ENCODE measurements at regions of chr19 and their contacts with region 1.

Region 1: DNA sequence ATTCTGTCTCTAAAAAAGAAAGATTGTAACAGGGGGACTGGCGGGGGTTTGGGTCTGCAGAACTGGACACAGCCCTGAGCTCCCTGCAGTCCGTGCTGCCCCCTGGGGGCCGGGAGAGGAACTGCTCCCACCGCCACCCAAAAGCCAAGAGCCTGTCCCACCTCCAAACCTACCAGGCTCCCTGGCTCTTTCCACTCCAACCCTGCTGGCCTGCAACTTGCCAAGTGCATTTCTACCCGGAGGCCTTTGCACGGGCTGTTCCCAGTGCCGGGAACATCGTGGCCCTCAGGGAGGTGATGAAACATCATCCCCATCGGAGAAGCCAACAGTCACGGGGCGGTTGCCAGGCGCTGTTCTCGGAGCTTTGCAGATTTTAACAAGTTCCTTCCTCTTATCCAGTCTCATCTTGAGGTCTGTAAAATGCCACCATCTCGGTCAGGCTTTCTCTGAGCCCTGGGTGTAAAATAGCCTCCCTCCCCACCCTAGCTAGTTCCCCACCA is 50.7 kb downstream of the SMIM24 start:
- DNase-seq: peak; percentile 53 to 88 (median 75)
- ATAC-seq: peak; percentile 90
- H3K4me3 ChIP-seq: no peak overlapping the region
- H3K4me3 Mint-ChIP-seq: no peak overlapping the region
- H3K27ac ChIP-seq: no peak overlapping the region
- H3K27ac Mint-ChIP-seq: no peak overlapping the region
- H3K4me1 ChIP-seq: peaks cover 3% of the 10 kb centered on the region
- H3K4me1 Mint-ChIP-seq: peaks cover 8% of the 10 kb centered on the region
- H3K27me3 ChIP-seq: no peaks in the 10 kb centered on the region
- H3K27me3 Mint-ChIP-seq: no peaks in the 10 kb centered on the region
- CTCF ChIP-seq: peak; percentile 98

Region 2: DNA sequence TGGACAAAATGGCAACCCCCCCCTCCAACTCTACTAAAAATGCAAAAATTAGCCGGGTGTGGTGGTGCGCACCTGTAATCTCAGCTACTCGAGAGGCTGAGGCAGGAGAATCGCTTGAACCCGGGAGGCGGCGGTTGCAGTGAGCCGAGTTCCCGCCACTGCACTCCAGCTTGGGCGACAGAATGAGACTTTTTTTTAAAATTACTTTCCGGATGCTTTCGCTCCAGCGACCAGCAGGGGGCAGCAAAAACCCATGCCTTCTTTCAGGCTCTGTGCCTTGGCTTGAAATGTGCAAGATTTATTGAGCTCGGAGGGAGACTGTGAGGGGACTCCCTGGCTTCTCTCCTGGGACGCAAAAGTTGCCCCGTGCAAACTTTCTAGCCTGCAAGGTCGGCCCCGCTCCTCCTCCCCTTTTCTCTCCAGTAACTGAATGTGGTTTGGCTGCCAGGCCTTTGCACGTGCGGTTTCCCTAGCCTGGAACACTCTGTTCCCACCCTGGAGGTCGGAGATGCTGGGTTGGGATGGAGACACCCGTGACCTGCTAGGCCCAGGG is 124.7 kb before region 1 on chr19:
- CTCF ChIA-PET with region 1: interaction called, 13 read pairs
- POLR2A ChIA-PET with region 1: no interaction called
- intact Hi-C with region 1: no loop called
- DNase-seq: peak; percentile 53 to 85 (median 79)
- ATAC-seq: peak; percentile 75
- H3K4me3 ChIP-seq: no peak overlapping the region
- H3K4me3 Mint-ChIP-seq: no peak overlapping the region
- H3K27ac ChIP-seq: no peak overlapping the region
- H3K27ac Mint-ChIP-seq: no peak overlapping the region
- H3K4me1 ChIP-seq: no peaks in the 10 kb centered on the region
- H3K4me1 Mint-ChIP-seq: no peaks in the 10 kb centered on the region
- H3K27me3 ChIP-seq: peaks cover 0 to 2% of the 10 kb centered on the region in 2 experiments
- H3K27me3 Mint-ChIP-seq: peaks cover 32% of the 10 kb centered on the region
- CTCF ChIP-seq: peak; percentile 82

Region 3: DNA sequence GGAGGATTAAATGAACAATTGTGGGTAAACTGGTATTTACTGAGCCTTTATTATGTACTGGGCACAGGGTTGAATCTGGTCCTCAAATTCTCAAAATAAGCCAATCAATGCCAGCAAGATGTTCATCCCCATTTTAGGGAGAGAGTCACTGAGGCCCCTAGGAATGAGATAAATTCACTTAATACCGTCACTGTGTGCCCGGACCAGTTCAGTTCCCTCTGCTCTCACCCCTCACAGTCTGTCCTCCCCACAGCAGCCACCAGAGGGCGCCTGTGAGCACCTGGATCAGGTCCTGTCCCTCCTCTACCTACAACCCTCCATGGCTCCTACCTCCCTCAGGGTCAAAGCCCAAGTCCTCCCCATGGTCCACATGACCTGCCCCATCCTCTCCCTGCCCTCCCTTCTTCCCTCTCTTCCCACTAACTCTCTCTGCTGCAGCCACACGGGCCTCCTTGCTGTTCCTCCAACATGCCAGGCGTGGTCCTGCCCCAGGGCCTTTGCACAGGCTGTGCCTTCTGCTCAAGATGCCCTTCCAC is 105.2 kb before region 1 on chr19:
- CTCF ChIA-PET with region 1: interaction called, 126 read pairs
- POLR2A ChIA-PET with region 1: interaction called, 4 read pairs
- intact Hi-C with region 1: loop called in 1 of 2 experiments (anchors 1 kb)
- DNase-seq: peak; percentile 58 to 80 (median 68)
- ATAC-seq: peak; percentile 72
- H3K4me3 ChIP-seq: no peak overlapping the region
- H3K4me3 Mint-ChIP-seq: no peak overlapping the region
- H3K27ac ChIP-seq: no peak overlapping the region
- H3K27ac Mint-ChIP-seq: no peak overlapping the region
- H3K4me1 ChIP-seq: no peaks in the 10 kb centered on the region
- H3K4me1 Mint-ChIP-seq: no peaks in the 10 kb centered on the region
- H3K27me3 ChIP-seq: peaks cover 0 to 3% of the 10 kb centered on the region in 2 experiments
- H3K27me3 Mint-ChIP-seq: peaks cover 11% of the 10 kb centered on the region
- CTCF ChIP-seq: peak; percentile 62

Region 4: DNA sequence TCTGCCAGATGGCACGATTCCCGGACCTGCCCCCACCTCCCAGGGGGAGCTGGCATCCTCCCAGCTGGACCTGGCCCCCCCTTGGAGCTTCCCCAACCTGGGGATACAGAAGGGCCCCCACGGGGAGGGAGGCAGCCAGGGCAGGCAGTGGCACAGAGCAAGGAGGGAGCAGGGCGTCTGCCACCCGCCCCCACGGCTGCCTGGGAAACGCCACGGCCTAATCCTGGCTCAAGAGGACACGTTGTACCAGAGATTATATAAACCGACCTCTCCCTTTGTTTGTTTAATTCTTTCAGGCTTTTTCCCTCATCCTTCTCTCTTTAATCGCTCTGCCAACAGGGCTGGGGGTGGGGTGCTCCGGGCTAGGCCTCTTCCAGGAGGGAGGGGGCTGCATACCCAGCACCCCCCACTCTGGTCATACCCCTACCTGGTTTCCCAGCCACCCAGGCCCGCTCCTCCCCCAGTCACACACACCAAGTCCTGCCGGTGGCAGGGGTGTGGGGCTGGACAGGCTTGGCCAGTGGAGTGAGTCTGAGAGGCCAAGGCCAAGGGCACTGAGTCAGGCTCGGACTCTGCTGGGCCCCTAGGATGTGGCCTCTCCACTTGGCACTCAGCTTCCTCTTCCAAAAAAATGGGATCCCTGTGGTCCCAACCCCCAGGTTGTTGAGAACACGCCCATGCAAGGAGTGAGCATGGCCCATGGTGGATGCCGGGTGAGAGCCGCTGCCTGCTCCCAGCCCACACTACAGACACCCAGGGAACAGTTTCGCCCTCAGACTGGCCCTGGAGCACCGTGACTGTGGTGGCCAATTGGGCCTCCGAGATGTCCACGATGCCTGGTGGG is 92.7 kb before region 1 on chr19:
- CTCF ChIA-PET with region 1: interaction called, 26 read pairs
- POLR2A ChIA-PET with region 1: interaction called, 6 read pairs
- intact Hi-C with region 1: no loop called
- DNase-seq: no peak
- ATAC-seq: no peak
- H3K4me3 ChIP-seq: no peak overlapping the region
- H3K4me3 Mint-ChIP-seq: no peak overlapping the region
- H3K27ac ChIP-seq: no peak overlapping the region
- H3K27ac Mint-ChIP-seq: no peak overlapping the region
- H3K4me1 ChIP-seq: peaks cover 12% of the 10 kb centered on the region
- H3K4me1 Mint-ChIP-seq: peaks cover 11% of the 10 kb centered on the region
- H3K27me3 ChIP-seq: peaks cover 0 to 3% of the 10 kb centered on the region in 2 experiments
- H3K27me3 Mint-ChIP-seq: no peaks in the 10 kb centered on the region
- CTCF ChIP-seq: no peak

Region 5: GRCh38 chr19:3343619-3344502 is 85.8 kb before region 1 on chr19:
- CTCF ChIA-PET with region 1: interaction called, 26 read pairs
- POLR2A ChIA-PET with region 1: interaction called, 6 read pairs
- intact Hi-C with region 1: no loop called
- DNase-seq: peak in 5 of 9 experiments; percentile 27 to 74 (median 60)
- ATAC-seq: peak; percentile 93
- H3K4me3 ChIP-seq: peak overlapping the region; percentile 27 to 39
- H3K4me3 Mint-ChIP-seq: peak overlapping the region; percentile 64
- H3K27ac ChIP-seq: no peak overlapping the region
- H3K27ac Mint-ChIP-seq: peak overlapping the region; percentile 60
- H3K4me1 ChIP-seq: peaks cover 5% of the 10 kb centered on the region
- H3K4me1 Mint-ChIP-seq: peaks cover 8% of the 10 kb centered on the region
- H3K27me3 ChIP-seq: no peaks in the 10 kb centered on the region
- H3K27me3 Mint-ChIP-seq: no peaks in the 10 kb centered on the region
- CTCF ChIP-seq: no peak

Region 6: DNA sequence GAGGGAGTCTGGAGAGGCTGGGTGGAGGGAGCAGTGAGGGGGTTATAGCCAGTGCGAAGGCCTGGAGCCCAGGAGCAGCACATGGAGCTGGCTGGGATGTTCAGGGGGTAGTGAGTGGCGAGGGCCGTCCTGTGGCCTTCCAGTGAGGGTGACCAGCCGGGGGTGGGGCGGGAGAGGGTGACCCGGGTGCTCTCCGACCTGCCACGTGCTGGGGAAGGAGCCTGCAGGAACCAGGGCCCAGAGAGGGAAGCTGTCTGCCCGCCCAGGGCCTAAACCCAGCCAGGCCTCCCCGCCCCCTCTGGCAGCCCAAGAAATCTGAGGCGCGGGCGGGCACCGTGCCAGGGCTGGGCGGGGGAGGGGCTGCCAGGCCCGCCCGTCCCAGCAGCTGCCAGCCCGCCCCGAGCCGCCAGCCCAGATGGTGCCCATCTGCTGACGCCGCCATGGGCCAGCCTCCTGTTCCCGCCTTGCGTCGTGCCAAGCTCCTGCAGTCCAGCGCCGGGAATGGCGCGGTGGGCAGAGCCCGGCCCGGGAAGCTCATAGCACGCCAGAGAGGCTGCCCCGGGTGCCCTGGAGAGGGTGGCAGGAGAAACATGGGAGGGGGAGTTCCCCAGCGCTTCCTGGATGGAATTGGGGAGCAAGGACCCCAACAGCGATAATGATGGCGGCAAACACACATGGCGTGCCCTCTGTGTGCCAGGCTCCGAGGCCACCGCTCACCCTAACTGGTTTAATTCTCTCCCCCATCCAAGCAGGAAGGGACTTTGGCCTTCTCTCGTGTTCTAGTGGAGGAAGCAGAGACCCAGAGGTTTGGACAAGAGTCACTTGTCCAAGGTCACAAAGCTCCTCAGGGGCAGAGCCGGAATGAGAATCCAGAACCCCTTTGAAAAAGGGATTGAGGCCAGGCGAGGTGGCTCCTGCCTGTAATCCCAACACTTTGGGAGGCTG is 41.7 kb before region 1 on chr19:
- CTCF ChIA-PET with region 1: interaction called, 16 read pairs
- POLR2A ChIA-PET with region 1: no interaction called
- intact Hi-C with region 1: no loop called
- DNase-seq: no peak
- ATAC-seq: no peak
- H3K4me3 ChIP-seq: no peak overlapping the region
- H3K4me3 Mint-ChIP-seq: no peak overlapping the region
- H3K27ac ChIP-seq: no peak overlapping the region
- H3K27ac Mint-ChIP-seq: no peak overlapping the region
- H3K4me1 ChIP-seq: no peaks in the 10 kb centered on the region
- H3K4me1 Mint-ChIP-seq: peaks cover 6% of the 10 kb centered on the region
- H3K27me3 ChIP-seq: no peaks in the 10 kb centered on the region
- H3K27me3 Mint-ChIP-seq: no peaks in the 10 kb centered on the region
- CTCF ChIP-seq: no peak

Region 7: DNA sequence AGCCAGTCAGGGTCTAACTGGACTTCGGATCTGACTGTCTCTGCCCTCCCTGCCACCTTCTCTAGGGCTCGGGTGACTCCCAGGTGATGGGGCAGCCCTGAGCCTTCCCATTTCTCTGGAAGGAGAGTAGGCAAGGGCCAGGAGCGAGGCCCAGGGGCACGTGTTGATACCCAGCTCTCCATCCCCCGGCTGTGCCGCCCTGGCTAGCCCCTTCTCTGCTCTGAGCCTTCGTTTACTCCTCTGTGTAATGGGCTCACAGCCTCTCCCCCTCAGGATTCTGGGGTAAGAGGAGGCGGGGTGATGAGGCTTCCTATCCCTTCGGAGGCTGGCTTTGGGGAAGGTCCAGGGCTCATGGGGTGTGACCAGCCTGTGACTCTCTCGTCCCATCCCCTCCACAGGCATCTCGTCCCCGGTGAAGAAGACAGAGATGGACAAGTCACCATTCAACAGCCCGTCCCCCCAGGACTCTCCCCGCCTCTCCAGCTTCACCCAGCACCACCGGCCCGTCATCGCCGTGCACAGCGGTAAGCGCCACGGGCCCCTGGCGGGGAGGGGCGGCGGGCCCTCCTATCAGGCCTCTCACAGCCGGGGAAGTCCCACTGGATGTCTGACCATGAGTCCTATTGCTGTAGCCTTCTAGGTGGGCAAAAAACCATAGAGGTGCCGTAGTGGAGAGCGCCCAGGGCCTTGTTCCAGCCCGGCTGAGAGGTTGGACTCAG is 19.1 kb after region 1 on chr19:
- CTCF ChIA-PET with region 1: interaction called, 10 read pairs
- POLR2A ChIA-PET with region 1: no interaction called
- intact Hi-C with region 1: no loop called
- DNase-seq: no peak
- ATAC-seq: no peak
- H3K4me3 ChIP-seq: no peak overlapping the region
- H3K4me3 Mint-ChIP-seq: no peak overlapping the region
- H3K27ac ChIP-seq: no peak overlapping the region
- H3K27ac Mint-ChIP-seq: no peak overlapping the region
- H3K4me1 ChIP-seq: no peaks in the 10 kb centered on the region
- H3K4me1 Mint-ChIP-seq: no peaks in the 10 kb centered on the region
- H3K27me3 ChIP-seq: no peaks in the 10 kb centered on the region
- H3K27me3 Mint-ChIP-seq: no peaks in the 10 kb centered on the region
- CTCF ChIP-seq: no peak

Region 8: GRCh38 chr19:3771906-3772455 is 342.4 kb after region 1 on chr19 and contains the start of gene RAX2:
- CTCF ChIA-PET with region 1: no interaction called
- POLR2A ChIA-PET with region 1: no interaction called
- intact Hi-C with region 1: no loop called
- DNase-seq: no peak
- ATAC-seq: no peak
- H3K4me3 ChIP-seq: no peak within 1 kb of the TSS
- H3K4me3 Mint-ChIP-seq: no peak within 1 kb of the TSS
- H3K27ac ChIP-seq: no peak within 1 kb of the TSS
- H3K27ac Mint-ChIP-seq: no peak within 1 kb of the TSS
- H3K4me1 ChIP-seq: peaks cover under 1% of the 10 kb centered on the region
- H3K4me1 Mint-ChIP-seq: peaks cover 2% of the 10 kb centered on the region
- H3K27me3 ChIP-seq: no peaks in the 10 kb centered on the region
- H3K27me3 Mint-ChIP-seq: no peaks in the 10 kb centered on the region
- CTCF ChIP-seq: no peak
- total RNA-seq, gene RAX2: not detected